Activated CD8-positive, alpha-beta T cell treated with anti-CD3 and anti-CD28 coated beads for 36 hours (primary cell): ENCODE measurements at regions of chr1 and their contacts with region 1.

Region 1: DNA sequence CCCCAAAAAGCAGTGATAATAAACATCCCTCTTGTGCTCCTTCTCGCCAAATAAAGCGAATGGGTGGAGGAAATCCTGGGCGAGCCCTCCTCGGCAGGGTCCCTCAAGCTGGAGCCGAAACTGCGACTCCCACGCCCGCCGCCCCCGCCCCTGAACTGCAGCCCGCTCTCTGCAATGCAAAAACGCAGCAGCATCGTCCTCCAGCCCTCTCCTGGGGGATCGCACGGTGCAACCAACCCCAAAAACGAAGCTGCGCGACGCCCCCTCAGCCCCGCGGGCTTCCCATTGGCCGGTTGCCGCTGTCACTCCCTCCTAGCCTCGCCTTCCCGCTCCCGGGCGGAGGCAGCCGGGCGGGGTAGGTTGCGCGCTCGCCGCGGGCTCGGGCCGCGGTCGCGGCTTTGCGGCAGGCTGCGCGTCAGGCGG is at the start of gene TMCC2:
- DNase-seq: peak; percentile 93
- ATAC-seq: peak; percentile 87
- H3K4me3 Mint-ChIP-seq: peak within 1 kb of the TSS; percentile 89
- H3K27ac Mint-ChIP-seq: peak within 1 kb of the TSS; percentile 93
- H3K4me1 Mint-ChIP-seq: peaks cover 42% of the 10 kb centered on the region
- H3K27me3 Mint-ChIP-seq: peaks cover 19% of the 10 kb centered on the region
- CTCF ChIP-seq: no peak
- total RNA-seq, gene TMCC2: 6.6 to 7.1 TPM

Region 2: GRCh38 chr1:205121660-205122488 is 105.7 kb before region 1 on chr1 and contains the start of gene RBBP5:
- CTCF ChIA-PET with region 1: interaction called, 27 read pairs
- POLR2A ChIA-PET with region 1: no interaction called
- intact Hi-C with region 1: no loop called
- DNase-seq: peak; percentile 96
- ATAC-seq: peak; percentile 96
- H3K4me3 Mint-ChIP-seq: peak within 1 kb of the TSS; percentile 95
- H3K27ac Mint-ChIP-seq: peak within 1 kb of the TSS; percentile 97
- H3K4me1 Mint-ChIP-seq: peaks cover 27% of the 10 kb centered on the region
- H3K27me3 Mint-ChIP-seq: no peaks in the 10 kb centered on the region
- CTCF ChIP-seq: peak; percentile 43
- total RNA-seq, gene RBBP5: 18.8 to 21.6 TPM

Region 3: GRCh38 chr1:205199090-205199930 is 28.3 kb before region 1 on chr1:
- CTCF ChIA-PET with region 1: interaction called, 20 read pairs
- POLR2A ChIA-PET with region 1: interaction called, 8 read pairs
- intact Hi-C with region 1: no loop called
- DNase-seq: peak; percentile 70
- ATAC-seq: peak; percentile 55
- H3K4me3 Mint-ChIP-seq: peak overlapping the region; percentile 53
- H3K27ac Mint-ChIP-seq: peak overlapping the region; percentile 94
- H3K4me1 Mint-ChIP-seq: peaks cover 69% of the 10 kb centered on the region
- H3K27me3 Mint-ChIP-seq: no peaks in the 10 kb centered on the region
- CTCF ChIP-seq: no peak

Region 4: GRCh38 chr1:205217418-205217817 is 10.2 kb before region 1 on chr1:
- CTCF ChIA-PET with region 1: interaction called, 13 read pairs
- POLR2A ChIA-PET with region 1: interaction called, 7 read pairs
- intact Hi-C with region 1: no loop called
- DNase-seq: no peak
- ATAC-seq: no peak
- H3K4me3 Mint-ChIP-seq: no peak overlapping the region
- H3K27ac Mint-ChIP-seq: no peak overlapping the region
- H3K4me1 Mint-ChIP-seq: peaks cover 12% of the 10 kb centered on the region
- H3K27me3 Mint-ChIP-seq: peaks cover 2% of the 10 kb centered on the region
- CTCF ChIP-seq: no peak

Region 5: DNA sequence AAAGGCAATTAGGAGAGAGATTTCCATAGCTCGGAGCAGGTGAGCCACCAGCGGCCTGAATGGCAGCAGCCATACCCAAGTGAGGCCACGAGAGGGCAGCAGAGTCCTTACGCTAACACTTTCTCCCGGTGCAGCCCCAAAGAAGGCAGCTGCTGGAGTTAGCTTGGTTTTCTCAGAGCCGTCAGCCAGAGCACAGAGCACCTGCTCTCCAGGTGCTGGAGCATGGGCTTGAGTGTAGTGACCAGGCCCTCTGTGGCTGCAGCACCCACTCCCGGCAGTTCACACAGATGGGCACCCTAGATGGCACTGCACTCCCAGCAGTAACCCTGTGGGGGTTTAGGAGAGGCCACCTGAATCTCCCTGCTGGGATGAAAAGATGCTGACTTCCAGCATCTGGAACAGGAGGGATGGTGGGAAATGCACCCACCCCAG is 46.0 kb after region 1 on chr1:
- CTCF ChIA-PET with region 1: interaction called, 14 read pairs
- POLR2A ChIA-PET with region 1: no interaction called
- intact Hi-C with region 1: no loop called
- DNase-seq: peak; percentile 92
- ATAC-seq: peak; percentile 94
- H3K4me3 Mint-ChIP-seq: no peak overlapping the region
- H3K27ac Mint-ChIP-seq: no peak overlapping the region
- H3K4me1 Mint-ChIP-seq: peaks cover 33% of the 10 kb centered on the region
- H3K27me3 Mint-ChIP-seq: no peaks in the 10 kb centered on the region
- CTCF ChIP-seq: peak; percentile 99

Region 6: DNA sequence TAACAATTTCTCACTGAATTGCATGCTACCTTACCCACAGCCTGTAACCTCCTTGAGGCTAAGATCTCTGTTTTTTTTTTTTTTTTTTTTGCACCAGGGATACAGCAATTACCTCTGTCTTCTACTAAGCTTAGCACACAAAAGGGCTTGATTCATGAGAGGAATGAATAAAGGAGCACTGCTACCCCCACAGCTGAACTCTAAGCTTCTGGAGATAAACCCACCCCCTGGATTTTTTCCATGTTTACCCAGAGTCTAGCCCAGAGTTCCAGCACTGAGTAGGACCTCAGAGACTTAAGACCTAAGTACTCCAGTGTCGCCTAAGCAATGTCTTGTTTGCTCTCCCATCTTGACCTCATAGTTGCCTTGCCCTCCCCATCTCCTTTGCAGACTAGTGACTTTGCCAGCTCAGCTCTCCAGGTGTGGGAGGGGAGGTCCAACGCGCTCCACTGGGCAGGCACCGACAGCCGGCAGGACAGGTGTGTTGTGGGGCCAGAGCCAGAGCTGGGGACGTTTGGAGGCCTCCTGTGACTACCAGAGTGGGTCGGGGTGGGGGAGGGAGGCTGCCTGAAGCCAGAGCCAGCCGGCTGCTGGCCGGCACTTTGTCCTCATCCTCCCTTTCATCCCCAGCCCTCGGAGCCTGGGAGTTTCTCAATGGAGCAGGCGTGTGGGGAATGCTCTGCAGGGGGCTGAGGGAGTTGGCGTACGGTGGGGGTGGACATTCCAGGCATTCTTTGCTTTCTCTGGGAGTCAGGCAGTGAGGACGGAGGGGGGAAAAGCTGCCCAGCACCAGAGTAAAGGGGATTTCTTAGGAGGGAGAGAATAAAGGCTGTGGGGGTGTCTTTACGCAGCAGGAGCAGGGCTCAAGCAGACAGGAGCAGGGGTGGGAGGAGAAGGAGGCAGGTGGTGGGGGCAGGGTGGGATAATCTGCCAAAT is 73.6 kb after region 1 on chr1:
- CTCF ChIA-PET with region 1: no interaction called
- POLR2A ChIA-PET with region 1: no interaction called
- intact Hi-C with region 1: no loop called
- DNase-seq: no peak
- ATAC-seq: no peak
- H3K4me3 Mint-ChIP-seq: no peak overlapping the region
- H3K27ac Mint-ChIP-seq: no peak overlapping the region
- H3K4me1 Mint-ChIP-seq: peaks cover 40% of the 10 kb centered on the region
- H3K27me3 Mint-ChIP-seq: no peaks in the 10 kb centered on the region
- CTCF ChIP-seq: no peak